GM12878 (cell line): ENCODE measurements at regions of chr3 and their contacts with region 1.

Region 1: DNA sequence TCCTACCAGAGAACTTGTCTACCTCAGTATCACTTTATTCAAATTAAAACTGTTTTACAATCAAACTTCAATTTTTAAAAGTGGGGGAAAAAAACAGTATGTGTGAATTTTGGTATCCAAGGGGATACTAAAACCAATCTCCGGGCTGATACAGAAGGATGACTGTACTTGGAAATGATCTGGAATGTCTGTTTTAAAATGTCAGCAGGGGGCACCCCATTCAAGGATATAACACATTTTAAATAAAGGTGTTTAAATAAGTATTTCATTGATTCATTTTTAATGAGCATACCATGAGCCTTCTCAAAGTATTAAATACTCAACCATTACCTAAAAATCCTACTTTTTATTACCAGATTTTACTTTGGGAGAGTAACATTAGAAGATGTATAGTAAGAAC is 67.9 kb downstream of the ULK4 start:
- DNase-seq: no peak
- ATAC-seq: no peak
- H3K4me3 ChIP-seq: no peak overlapping the region
- H3K27ac ChIP-seq: no peak overlapping the region
- H3K4me1 ChIP-seq: no peaks in the 10 kb centered on the region
- H3K27me3 ChIP-seq: no peaks in the 10 kb centered on the region
- CTCF ChIP-seq: peak; percentile 18 to 49 (median 34); a peak in 3 of 6 replicates
- EP300 ChIP-seq: no peak
- POLR2A ChIP-seq: no peak
- RAD21 ChIP-seq: peak; percentile 70

Region 2: DNA sequence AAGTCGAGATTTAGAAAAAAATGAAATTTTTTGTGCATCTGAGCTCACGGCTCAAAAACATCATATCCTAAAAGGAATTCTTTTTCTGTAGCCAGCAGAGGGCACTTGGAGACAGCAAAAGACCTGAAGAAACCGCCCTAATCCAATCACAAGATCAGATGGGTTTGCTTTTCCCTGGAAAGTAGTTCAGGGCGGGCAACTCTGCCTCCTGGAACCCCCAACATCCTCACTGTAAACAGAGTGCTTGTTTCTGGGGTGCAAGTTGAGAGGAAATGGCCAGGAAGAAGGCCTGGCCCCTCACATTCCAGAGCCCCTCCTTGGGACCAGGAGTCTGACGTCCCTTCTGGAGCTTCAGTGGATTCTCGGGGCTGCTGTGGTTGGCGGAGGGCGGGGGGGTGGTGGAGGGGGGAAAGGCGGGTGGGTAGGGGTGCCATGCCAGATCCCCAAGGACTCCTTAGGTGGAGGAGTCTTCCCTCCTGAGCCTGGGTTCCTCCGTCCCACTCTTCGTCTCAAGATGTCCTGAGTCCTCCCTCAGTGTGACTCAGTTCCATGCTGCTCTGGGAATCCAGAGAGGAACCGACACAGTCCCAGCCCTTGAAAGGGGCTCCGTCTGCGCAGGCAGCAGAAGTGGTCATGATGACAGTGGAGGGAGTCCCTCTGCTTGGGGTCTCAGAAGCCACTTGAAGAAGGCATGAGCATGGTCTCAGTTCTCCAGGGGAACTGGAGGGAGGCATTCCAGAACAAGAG is 336.1 kb after region 1 on chr3:
- CTCF ChIA-PET with region 1: interaction called, 3 read pairs
- POLR2A ChIA-PET with region 1: no interaction called
- RAD21 ChIA-PET with region 1: no interaction called
- SMC1A ChIA-PET with region 1: no interaction called
- in situ Hi-C with region 1: loop called (anchors 10 kb)
- intact Hi-C with region 1: loop called (anchors 5 kb)
- DNase-seq: no peak
- ATAC-seq: no peak
- H3K4me3 ChIP-seq: no peak overlapping the region
- H3K27ac ChIP-seq: no peak overlapping the region
- H3K4me1 ChIP-seq: peaks cover 3% of the 10 kb centered on the region; the same call in 1 of the 2 replicates
- H3K27me3 ChIP-seq: no peaks in the 10 kb centered on the region
- CTCF ChIP-seq: peak in 2 of 3 experiments; percentile 19 to 30; a peak in 3 of 6 replicates
- EP300 ChIP-seq: no peak
- POLR2A ChIP-seq: no peak
- RAD21 ChIP-seq: peak; percentile 53